Activated CD4-positive, alpha-beta memory T cell treated with anti-CD3 and anti-CD28 coated beads, Interleukin-2, amount 10 ng/mL, durations not matched to agents 7 days and 5 days (primary cell): ENCODE measurements at regions of chr11 and their contacts with region 1.

Region 1: GRCh38 chr11:75525596-75526541 is at the start of gene GDPD5:
- DNase-seq: peak; percentile 93
- H3K4me3 Mint-ChIP-seq: peak within 1 kb of the TSS; percentile 94
- H3K27ac Mint-ChIP-seq: peak within 1 kb of the TSS; percentile 67
- H3K4me1 Mint-ChIP-seq: peaks cover 51% of the 10 kb centered on the region
- H3K27me3 Mint-ChIP-seq: peaks cover 9% of the 10 kb centered on the region
- total RNA-seq, gene GDPD5: 107 to 109 TPM

Region 2: GRCh38 chr11:75445315-75445953 is 80.4 kb before region 1 on chr11:
- CTCF ChIA-PET with region 1: interaction called, 159 read pairs
- POLR2A ChIA-PET with region 1: interaction called, 5 read pairs
- DNase-seq: peak; percentile 73
- H3K4me3 Mint-ChIP-seq: no peak overlapping the region
- H3K27ac Mint-ChIP-seq: no peak overlapping the region
- H3K4me1 Mint-ChIP-seq: peaks cover 5% of the 10 kb centered on the region
- H3K27me3 Mint-ChIP-seq: no peaks in the 10 kb centered on the region

Region 3: DNA sequence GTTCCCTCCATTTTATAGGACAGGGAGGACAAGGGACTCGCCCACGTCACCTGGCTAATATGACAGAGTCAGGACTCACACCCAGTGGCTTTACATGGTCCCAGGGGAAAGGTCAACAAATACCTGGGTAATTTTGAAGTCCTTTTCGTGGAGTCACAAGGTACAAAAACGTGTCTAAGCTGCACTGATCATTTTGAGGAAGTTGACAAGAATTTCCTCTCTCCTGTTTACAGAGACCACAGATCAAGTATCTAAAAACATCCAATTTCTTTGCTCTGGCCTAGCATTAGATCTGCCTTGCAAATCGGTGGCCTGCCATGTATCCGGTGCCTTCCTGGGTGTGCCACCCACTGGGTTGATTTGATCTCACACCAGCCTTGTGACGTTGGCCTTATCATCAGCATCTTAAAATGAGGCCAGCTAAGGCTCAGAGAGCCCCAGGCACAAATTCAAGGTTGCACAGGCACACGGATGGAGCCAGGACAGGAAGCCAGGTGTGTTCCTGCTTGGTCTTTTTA is 17.8 kb before region 1 on chr11:
- CTCF ChIA-PET with region 1: interaction called, 3 read pairs
- POLR2A ChIA-PET with region 1: interaction called, 29 read pairs
- DNase-seq: peak; percentile 83
- H3K4me3 Mint-ChIP-seq: peak overlapping the region; percentile 11
- H3K27ac Mint-ChIP-seq: peak overlapping the region; percentile 94
- H3K4me1 Mint-ChIP-seq: peaks cover 50% of the 10 kb centered on the region
- H3K27me3 Mint-ChIP-seq: no peaks in the 10 kb centered on the region